Psoas muscle (tissue), 8 donors: ENCODE measurements at regions of chr1 and their contacts with region 1.

Region 1: GRCh38 chr1:32702599-32703478 is at the start of gene SYNC:
- DNase-seq: peak; percentile 83 to 94
- ATAC-seq: peak; percentile 82 to 86 (median 84)
- H3K4me3 ChIP-seq: peak within 1 kb of the TSS; percentile 83
- H3K27ac ChIP-seq: peak within 1 kb of the TSS; percentile 99
- H3K4me1 ChIP-seq: peaks cover 30% of the 10 kb centered on the region
- H3K27me3 ChIP-seq: no peaks in the 10 kb centered on the region
- CTCF ChIP-seq: no peak
- total RNA-seq, gene SYNC: 40.4 to 82.5 (median 54.4) TPM

Region 2: DNA sequence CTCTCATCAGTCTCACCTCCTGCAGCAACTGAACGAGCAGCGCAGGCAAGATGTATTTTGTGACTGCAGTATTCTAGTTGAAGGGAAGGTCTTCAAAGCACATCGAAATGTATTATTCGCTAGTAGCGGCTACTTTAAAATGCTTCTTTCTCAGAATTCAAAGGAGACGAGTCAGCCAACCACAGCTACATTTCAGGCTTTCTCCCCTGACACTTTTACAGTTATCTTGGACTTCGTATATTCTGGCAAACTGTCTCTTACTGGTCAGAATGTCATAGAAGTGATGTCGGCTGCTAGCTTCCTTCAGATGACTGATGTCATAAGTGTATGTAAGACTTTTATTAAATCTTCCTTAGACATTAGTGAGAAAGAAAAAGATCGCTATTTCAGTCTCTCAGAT is 109.9 kb before region 1 on chr1:
- intact Hi-C with region 1: no loop called
- DNase-seq: no peak
- ATAC-seq: no peak
- H3K4me3 ChIP-seq: no peak overlapping the region
- H3K27ac ChIP-seq: no peak overlapping the region
- H3K4me1 ChIP-seq: no peaks in the 10 kb centered on the region
- H3K27me3 ChIP-seq: no peaks in the 10 kb centered on the region
- CTCF ChIP-seq: no peak

Region 3: DNA sequence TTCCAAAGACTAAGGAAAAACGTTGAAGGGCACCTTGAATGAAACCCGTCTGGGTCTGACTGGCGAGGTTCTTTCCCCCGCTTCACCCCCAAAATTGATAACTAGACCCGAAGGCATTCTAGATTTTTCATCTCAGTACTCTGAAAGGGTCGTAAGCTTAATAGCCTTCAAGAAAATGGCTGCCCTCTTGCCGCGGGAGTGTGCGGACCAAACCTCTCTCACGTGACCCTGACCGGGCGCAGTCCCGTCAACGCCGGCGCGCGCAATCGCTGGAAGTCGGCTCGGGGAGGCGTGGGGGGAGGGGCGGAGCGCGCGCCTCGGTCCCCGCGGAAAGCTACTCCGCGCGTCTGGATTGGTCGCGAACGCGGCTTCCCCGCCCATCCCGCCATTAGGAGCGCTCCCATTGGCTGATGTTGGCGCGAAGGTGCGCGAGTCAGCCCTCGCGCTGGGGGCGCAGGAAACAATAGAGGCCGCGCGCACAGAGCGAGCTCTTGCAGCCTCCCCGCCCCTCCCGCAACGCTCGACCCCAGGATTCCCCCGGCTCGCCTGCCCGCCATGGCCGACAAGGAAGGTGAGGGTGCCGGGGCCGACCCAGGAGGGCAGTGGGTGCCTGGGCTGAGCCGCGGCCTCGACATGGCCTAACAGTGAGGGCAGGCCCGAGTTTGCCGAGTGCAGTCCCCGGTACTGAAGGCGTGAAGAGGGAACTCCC is 51.9 kb before region 1 on chr1 and contains the start of gene RBBP4:
- intact Hi-C with region 1: loop called in 1 of 2 experiments (anchors 5 kb)
- DNase-seq: peak; percentile 99
- ATAC-seq: peak; percentile 94 to 96 (median 96)
- H3K4me3 ChIP-seq: peak within 1 kb of the TSS; percentile 84
- H3K27ac ChIP-seq: peak within 1 kb of the TSS; percentile 99
- H3K4me1 ChIP-seq: peaks cover 43% of the 10 kb centered on the region
- H3K27me3 ChIP-seq: no peaks in the 10 kb centered on the region
- CTCF ChIP-seq: peak; percentile 1
- total RNA-seq, gene RBBP4: 66.3 to 87.8 (median 85.1) TPM

Region 4: DNA sequence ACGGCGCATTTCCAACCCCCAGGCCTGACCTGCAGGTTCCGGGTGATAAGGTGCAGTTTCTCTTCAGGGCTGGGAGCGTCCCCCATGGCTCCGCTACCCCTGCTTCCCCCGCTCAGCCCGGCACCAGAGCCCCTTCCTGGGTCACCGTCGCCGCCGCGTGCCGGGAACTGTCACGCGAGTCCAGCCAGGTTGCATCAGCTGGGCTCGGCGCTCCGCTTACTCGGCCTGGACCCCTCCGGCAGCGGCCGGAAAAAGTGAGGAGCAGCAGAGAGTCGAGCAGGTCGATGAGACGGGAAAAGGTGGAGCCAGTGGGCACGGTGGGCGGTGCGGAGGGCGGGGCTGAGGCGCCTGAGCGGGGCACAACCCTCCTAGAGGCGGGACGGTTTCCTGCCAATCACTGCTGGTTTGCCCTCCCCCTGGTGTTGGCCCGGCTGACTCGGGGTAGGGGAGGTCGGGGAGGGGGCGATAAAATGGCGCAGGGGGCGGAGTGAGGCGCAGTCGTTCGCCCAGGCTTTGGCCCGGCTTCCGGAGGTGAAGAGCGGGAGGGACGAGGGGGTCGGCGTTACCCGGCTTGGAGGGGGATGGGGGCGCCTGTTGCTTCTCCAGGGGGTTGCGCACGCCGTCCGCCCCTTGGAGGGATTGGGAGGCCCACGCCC is 114.4 kb after region 1 on chr1 and contains the starts of genes S100PBP and YARS1:
- intact Hi-C with region 1: loop called in 1 of 2 experiments (anchors 5 kb)
- DNase-seq: peak; percentile 100
- ATAC-seq: peak; percentile 95 to 97 (median 96)
- H3K4me3 ChIP-seq: peak within 1 kb of the TSS; percentile 74
- H3K27ac ChIP-seq: peak within 1 kb of the TSS; percentile 94
- H3K4me1 ChIP-seq: peaks cover 43% of the 10 kb centered on the region
- H3K27me3 ChIP-seq: no peaks in the 10 kb centered on the region
- CTCF ChIP-seq: no peak
- total RNA-seq, gene S100PBP: 9.7 to 18.1 (median 12.9) TPM
- total RNA-seq, gene YARS1: 36.9 to 90.2 (median 72.4) TPM